IMR-90 (cell line): ENCODE measurements at regions of chr1 and their contacts with region 1.

Region 1: DNA sequence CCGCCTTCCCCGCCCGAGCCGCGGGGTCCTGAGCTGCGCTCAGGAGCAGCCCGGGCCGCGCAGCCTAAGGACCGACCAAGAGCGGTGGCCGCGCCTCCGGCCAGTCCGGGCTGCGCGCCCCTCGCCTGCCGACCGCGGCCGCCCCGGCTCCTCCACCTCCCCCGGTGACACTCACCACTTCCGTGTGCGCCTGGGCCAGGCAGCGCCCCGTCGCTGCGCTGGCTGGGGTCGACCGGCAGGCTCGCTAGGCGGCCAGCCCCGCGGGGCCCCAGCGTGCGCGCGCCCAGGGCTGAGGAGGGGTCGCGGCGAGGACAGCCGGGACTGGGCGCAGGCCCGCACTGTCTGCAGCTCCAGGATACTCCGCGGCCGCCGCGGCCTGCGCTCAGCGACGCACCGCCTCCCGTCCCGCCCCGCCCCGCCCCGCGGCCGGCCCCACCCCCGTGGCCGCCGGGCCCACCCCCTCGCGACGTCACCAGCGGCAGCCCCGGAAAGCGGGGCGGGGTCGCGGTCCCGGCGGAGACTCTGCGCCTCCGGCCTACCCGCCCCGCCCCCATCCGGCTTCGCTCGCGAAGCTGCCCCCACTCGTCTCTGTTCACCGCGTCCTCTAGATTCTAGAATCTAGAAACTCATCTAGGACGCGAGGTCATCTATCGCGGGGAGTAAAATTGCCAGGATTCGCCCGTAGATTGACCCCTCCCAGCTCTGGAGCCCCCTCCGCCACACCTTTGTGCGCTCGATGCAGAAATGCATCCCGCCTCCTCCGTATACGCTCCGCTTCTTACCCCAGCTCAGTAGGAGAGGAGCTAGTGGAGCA is at the start of gene JAK1:
- DNase-seq: peak; percentile 72
- ATAC-seq: peak; percentile 96
- H3K4me3 ChIP-seq: peak within 1 kb of the TSS; percentile 91
- H3K27ac ChIP-seq: peak within 1 kb of the TSS; percentile 97
- H3K4me1 ChIP-seq: peaks cover 2% of the 10 kb centered on the region; the same call in 1 of the 2 replicates
- H3K27me3 ChIP-seq: no peaks in the 10 kb centered on the region
- CTCF ChIP-seq: no peak
- POLR2A ChIP-seq: peak; percentile 89
- RAD21 ChIP-seq: no peak; the same call in 1 of the 2 replicates
- total RNA-seq, gene JAK1: 101 and 103 TPM in 2 replicates

Region 2: DNA sequence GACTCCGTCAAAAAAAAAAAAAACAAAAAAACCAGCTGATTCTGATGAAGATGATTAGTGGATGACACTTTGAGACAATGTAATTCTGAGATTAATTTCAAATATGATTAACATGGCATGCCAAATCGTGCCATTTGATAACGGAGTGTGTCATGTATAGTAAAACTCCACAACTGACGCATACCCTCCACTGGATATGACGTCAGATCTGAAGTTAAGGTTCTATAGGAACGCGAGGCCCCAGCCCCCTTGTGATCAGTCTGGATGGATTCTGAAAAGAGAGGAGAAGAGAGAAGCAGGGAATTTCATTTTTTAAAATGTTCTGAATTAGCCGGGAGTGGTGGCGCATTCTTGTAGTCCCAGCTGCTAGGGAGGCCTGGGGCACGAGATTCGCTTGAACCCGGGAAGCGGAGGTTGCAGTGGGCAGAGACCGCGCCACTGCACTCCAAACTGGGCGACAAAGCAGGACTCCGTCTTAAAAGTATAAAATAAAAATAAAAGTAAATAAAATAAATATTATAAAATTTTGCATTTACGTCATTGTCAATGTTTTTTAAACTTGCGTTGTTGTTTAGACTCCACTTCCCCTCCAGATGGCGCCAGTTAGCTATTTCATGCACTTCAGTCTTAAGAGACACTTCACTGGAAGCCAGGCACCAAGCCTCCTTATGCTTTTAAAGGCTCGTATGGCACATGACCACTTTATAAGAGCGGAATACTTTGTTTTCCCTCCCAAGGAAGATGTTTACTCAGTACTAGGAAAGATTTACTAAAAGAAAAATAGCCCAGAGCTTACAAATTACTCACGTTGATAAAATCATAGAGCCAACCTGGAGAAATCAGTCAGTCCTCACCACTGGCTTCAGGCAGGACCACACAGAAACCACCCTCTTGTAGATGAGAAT is 697.5 kb before region 1 on chr1:
- CTCF ChIA-PET with region 1: no interaction called
- POLR2A ChIA-PET with region 1: no interaction called
- dilution Hi-C with region 1: no loop called
- in situ Hi-C with region 1: no loop called
- intact Hi-C with region 1: loop called (anchors 2 kb)
- DNase-seq: peak; percentile 85
- ATAC-seq: peak; percentile 96
- H3K4me3 ChIP-seq: no peak overlapping the region
- H3K27ac ChIP-seq: no peak overlapping the region
- H3K4me1 ChIP-seq: no peaks in the 10 kb centered on the region
- H3K27me3 ChIP-seq: peaks cover 9% of the 10 kb centered on the region
- CTCF ChIP-seq: peak; percentile 91
- POLR2A ChIP-seq: no peak
- RAD21 ChIP-seq: peak; percentile 91

Region 3: DNA sequence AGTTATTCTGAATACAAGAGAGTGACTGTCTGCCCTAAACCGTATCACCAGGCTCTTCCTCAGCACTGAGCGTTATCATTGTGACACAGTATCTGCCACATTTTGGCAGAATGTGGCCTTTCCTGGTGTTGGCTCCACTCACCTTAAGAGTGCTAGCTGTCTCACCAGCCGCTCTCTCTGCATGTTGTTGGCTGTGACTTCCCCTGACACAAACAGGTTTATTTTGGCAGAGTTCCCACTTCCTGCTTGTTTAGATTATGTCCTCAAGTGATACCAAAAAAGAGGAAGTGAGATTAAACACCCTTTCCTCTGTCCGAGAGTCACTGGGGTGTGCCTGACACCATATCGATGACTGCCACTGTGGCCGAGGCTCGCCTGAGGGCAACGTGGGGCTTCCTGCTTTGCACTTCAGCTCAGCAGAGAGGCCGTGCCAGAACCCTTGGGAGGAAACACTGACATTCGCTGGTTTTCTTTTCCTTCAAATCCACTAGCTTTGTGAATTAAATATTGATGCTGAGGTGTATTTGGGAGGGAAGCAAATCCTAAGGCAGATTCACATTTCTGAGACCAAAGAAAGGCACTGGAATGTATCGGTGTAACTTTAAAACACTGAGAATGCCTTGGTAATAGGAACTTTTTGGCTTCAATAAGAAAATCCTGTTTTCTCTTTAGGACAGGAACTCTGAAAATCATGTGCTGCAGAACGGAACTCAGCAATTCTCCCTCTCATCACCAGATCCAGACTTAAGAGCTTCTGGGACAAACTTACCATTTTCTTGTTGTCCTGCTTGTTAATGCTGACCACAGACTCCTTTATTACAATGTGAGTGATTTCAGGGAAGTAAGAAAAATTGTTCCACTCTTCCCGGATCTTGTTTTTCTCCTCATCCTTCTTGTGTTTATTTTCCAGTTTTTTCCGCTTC is 102.1 kb before region 1 on chr1:
- CTCF ChIA-PET with region 1: no interaction called
- POLR2A ChIA-PET with region 1: no interaction called
- dilution Hi-C with region 1: no loop called
- in situ Hi-C with region 1: no loop called
- intact Hi-C with region 1: loop called (anchors 5 kb)
- DNase-seq: no peak
- ATAC-seq: no peak
- H3K4me3 ChIP-seq: no peak overlapping the region
- H3K27ac ChIP-seq: no peak overlapping the region
- H3K4me1 ChIP-seq: no peaks in the 10 kb centered on the region
- H3K27me3 ChIP-seq: no peaks in the 10 kb centered on the region
- CTCF ChIP-seq: no peak
- POLR2A ChIP-seq: no peak
- RAD21 ChIP-seq: no peak

Region 4: GRCh38 chr1:64898107-64898845 is 68.1 kb before region 1 on chr1:
- CTCF ChIA-PET with region 1: no interaction called
- POLR2A ChIA-PET with region 1: no interaction called
- dilution Hi-C with region 1: no loop called
- in situ Hi-C with region 1: no loop called
- intact Hi-C with region 1: loop called (anchors 5 kb)
- DNase-seq: peak; percentile 97
- ATAC-seq: peak; percentile 97
- H3K4me3 ChIP-seq: no peak overlapping the region
- H3K27ac ChIP-seq: no peak overlapping the region
- H3K4me1 ChIP-seq: peaks cover 10% of the 10 kb centered on the region
- H3K27me3 ChIP-seq: no peaks in the 10 kb centered on the region
- CTCF ChIP-seq: no peak
- POLR2A ChIP-seq: no peak
- RAD21 ChIP-seq: 0 out of 2 replicates have a peak, but pooled peaks have one; percentile 1

Region 5: GRCh38 chr1:64948905-64949833 is 17.2 kb before region 1 on chr1:
- CTCF ChIA-PET with region 1: no interaction called
- POLR2A ChIA-PET with region 1: no interaction called
- dilution Hi-C with region 1: no loop called
- in situ Hi-C with region 1: no loop called
- intact Hi-C with region 1: loop called (anchors 2 kb)
- DNase-seq: no peak
- ATAC-seq: peak; percentile 35
- H3K4me3 ChIP-seq: no peak overlapping the region
- H3K27ac ChIP-seq: no peak overlapping the region
- H3K4me1 ChIP-seq: peaks cover 2% of the 10 kb centered on the region
- H3K27me3 ChIP-seq: no peaks in the 10 kb centered on the region
- CTCF ChIP-seq: no peak
- POLR2A ChIP-seq: no peak
- RAD21 ChIP-seq: no peak

Region 6: GRCh38 chr1:65090403-65090802 is 124.0 kb after region 1 on chr1:
- CTCF ChIA-PET with region 1: no interaction called
- POLR2A ChIA-PET with region 1: no interaction called
- dilution Hi-C with region 1: no loop called
- in situ Hi-C with region 1: no loop called
- intact Hi-C with region 1: no loop called
- DNase-seq: no peak
- ATAC-seq: no peak
- H3K4me3 ChIP-seq: no peak overlapping the region
- H3K27ac ChIP-seq: no peak overlapping the region
- H3K4me1 ChIP-seq: no peaks in the 10 kb centered on the region
- H3K27me3 ChIP-seq: peaks cover 3% of the 10 kb centered on the region
- CTCF ChIP-seq: no peak
- POLR2A ChIP-seq: no peak
- RAD21 ChIP-seq: no peak

Region 7: DNA sequence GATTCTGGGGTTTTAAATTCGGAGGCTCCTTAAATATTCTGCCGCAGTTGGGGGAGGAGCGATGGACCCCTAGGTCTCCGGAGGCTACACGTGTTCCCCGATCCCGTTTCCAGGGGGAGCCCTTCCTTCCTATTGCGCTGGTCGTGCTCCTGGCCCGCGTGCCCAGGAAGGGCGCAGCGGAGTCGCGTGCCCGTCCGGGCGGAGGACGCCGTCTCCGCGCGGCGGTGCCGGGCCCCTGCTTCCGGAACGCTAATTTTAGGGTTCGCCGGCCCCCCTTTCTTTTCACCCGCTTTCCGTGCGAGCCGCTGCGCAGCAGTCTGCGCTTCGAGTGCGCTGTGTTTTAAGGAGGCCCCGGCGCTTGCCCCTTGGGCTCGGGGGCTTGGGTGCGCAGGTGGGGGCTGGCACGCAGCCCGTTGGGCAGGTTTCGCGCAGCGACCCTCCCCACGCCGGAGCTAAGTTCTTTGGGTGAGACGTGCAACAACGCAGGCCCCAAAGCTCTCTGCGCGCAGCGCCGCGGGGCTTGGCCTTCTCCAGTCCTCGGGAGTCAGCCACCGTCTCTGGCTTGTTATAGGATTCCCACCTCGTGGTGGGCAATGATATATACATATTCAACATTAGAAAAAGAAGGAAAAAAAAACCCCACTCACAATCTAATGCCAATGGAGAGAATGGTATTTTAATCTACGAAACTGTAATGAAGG is 299.4 kb after region 1 on chr1:
- CTCF ChIA-PET with region 1: no interaction called
- POLR2A ChIA-PET with region 1: no interaction called
- dilution Hi-C with region 1: no loop called
- in situ Hi-C with region 1: no loop called
- intact Hi-C with region 1: no loop called
- DNase-seq: no peak
- ATAC-seq: peak; percentile 76
- H3K4me3 ChIP-seq: peak overlapping the region; percentile 33
- H3K27ac ChIP-seq: no peak overlapping the region
- H3K4me1 ChIP-seq: no peaks in the 10 kb centered on the region
- H3K27me3 ChIP-seq: peaks cover 22% of the 10 kb centered on the region
- CTCF ChIP-seq: no peak
- POLR2A ChIP-seq: no peak
- RAD21 ChIP-seq: no peak